HCT116 (cell line): ENCODE measurements at regions of chr10 and their contacts with region 1.

Region 1: GRCh38 chr10:101141616-101142532 is 10.8 kb downstream of the TLX1 start:
- DNase-seq: peak; percentile 81
- ATAC-seq: peak; percentile 96
- H3K4me3 ChIP-seq: 0 out of 4 replicates have a peak overlapping the region, but pooled peaks of 1 of the 2 experiments have one; percentile 6
- H3K27ac ChIP-seq: peak overlapping the region; percentile 41
- H3K4me1 ChIP-seq: peaks cover 3 to 23% of the 10 kb centered on the region in 2 experiments; a peak in 3 of 4 replicates
- H3K27me3 ChIP-seq: no peaks in the 10 kb centered on the region
- CTCF ChIP-seq: peak; percentile 99 to 100 (median 99)
- POLR2A ChIP-seq: no peak
- RAD21 ChIP-seq: peak; percentile 99

Region 2: DNA sequence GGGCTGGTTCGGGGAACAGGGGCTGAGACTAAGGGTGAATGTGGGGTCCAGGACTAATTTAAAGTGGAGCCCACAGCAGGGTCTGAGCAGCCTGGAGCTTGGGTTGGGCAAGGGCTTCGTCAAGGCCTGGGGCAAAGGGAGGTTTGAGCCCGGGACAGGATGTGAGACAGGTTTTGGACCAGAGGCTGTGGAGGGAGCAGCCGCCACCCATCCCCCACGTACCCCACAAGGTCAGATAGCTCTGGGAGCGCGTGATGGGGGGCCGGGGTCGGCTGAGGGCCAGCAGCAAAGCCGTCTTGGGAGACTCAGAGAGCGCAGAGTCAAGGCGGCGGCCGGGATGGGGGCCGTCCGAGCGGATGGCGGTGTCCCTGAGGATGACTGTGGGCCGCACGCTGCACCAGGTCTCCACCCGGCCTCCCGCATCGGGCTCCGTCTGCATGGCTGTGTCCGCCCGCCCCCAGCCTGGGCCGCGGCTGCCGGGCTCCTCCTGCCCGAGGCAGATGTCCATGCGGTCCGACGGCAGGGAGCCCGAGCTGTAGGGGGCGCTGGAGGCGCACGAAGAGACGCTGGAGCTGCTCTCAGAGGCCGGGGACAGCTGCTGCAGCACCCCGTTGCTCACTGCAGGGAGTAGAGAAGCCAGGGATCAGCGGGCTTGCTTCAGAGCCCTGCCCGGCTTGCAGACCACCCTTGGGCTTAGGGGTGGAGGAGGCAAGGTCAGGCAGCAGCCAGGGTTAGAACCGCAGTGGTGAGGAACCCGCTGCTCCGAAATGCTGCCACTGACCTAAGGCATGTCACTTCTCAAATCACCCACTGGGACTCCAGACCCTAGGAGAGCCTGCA is 123.1 kb before region 1 on chr10:
- CTCF ChIA-PET with region 1: interaction called, 18 read pairs
- POLR2A ChIA-PET with region 1: no interaction called
- RAD21 ChIA-PET with region 1: interaction called, 6 to 7 read pairs
- intact Hi-C with region 1: no loop called
- DNase-seq: peak; percentile 72
- ATAC-seq: peak; percentile 91
- H3K4me3 ChIP-seq: peak overlapping the region; percentile 13 to 38; a peak in 3 of 4 replicates
- H3K27ac ChIP-seq: no peak overlapping the region
- H3K4me1 ChIP-seq: peaks cover 7 to 30% of the 10 kb centered on the region in 2 experiments; a peak in 3 of 4 replicates
- H3K27me3 ChIP-seq: no peaks in the 10 kb centered on the region
- CTCF ChIP-seq: peak in 2 of 3 experiments; percentile 92 to 94; a peak in 4 of 6 replicates
- POLR2A ChIP-seq: no peak
- RAD21 ChIP-seq: no peak

Region 3: DNA sequence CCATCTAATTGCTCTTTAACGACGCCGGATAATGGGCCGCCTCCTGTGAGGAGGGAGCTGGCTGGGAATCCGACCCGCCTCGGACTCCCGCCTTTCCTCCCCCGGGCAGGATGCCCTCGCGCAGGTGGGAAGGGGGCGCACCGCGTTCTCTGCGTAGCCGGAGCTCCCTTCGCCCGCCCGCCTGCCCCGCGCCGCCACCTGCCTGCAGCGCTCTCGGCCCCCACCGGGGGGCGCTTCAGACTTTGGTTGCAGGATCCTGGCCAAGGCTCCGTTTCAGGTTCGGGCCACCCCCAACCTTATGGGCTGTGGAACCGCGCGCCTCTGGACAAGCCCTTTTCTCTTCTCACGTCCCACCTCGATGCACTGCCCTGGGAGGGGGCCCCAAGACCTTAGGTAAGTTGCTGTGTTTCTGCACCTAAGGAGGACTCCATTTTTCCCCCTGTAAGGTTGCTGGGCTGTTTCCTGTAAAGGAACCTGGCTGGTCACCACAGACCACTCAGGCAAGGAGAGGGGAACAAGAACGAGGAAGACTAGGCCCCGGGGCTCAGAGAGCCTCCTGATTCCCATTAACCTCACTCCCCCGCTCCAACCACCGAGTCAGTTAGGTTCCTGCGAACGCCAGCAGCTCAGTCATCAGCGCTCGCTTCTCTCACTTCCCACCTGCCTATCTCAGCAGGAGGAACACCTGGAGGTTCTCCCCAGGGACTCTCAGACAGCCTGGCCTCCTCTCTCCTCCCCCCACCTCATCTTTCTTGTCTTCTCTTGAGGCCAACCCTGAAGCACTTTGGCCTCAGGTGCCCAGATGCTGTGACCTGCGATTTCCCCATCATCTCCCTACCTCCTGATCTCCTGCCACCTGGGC is 91.4 kb before region 1 on chr10:
- CTCF ChIA-PET with region 1: interaction called, 104 read pairs
- POLR2A ChIA-PET with region 1: interaction called, 8 read pairs
- RAD21 ChIA-PET with region 1: interaction called, 17 read pairs
- intact Hi-C with region 1: no loop called
- DNase-seq: no peak
- ATAC-seq: peak; percentile 90
- H3K4me3 ChIP-seq: peak overlapping the region in 1 of 2 experiments; percentile 38; a peak in 3 of 4 replicates
- H3K27ac ChIP-seq: no peak overlapping the region; the same call in 1 of the 2 replicates
- H3K4me1 ChIP-seq: peaks cover 18 to 36% of the 10 kb centered on the region in 2 experiments
- H3K27me3 ChIP-seq: no peaks in the 10 kb centered on the region
- CTCF ChIP-seq: peak in 2 of 3 experiments; percentile 98; a peak in 4 of 6 replicates
- POLR2A ChIP-seq: no peak
- RAD21 ChIP-seq: no peak

Region 4: DNA sequence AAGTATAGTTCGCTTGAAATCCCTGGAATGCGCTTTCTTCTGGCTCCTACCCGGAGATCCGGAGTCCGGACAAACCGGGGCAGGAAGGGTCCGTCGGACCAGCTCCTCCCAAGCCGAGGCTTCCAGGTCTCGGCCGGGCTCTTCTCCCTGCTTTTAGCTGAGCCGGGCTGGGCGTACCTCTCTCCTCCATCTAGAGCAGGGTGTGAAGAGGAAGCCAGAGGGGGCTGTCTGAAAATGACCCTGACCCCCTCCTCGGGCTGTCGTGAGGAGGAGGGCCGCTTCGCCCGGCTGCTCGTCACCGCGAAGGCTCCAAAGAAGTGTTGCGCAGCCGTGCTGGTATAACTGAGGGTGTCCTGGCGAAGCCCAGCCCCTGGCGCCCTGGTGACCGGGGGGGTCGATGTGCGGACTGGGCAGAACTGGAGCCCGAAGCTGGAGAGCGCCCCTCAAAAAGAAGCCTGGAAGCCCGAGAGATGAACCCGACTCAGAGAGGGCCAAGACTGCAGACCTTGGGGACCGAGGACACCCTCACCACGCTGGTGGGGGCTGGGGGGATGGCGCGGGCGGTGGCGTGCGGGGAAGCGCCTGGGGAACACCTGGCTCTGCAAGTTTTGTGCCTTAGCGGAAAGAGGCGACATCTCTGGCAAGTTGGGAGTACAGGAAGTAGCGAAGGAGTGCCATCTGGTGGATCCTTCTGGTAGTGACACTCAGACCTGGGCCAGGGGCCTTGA is 74.4 kb before region 1 on chr10:
- CTCF ChIA-PET with region 1: interaction called, 44 read pairs
- POLR2A ChIA-PET with region 1: interaction called, 5 read pairs
- RAD21 ChIA-PET with region 1: interaction called, 4 to 6 read pairs
- intact Hi-C with region 1: no loop called
- DNase-seq: peak; percentile 91
- ATAC-seq: peak; percentile 39
- H3K4me3 ChIP-seq: peak overlapping the region; percentile 66 to 71
- H3K27ac ChIP-seq: peak overlapping the region; percentile 93
- H3K4me1 ChIP-seq: peaks cover 37 to 79% of the 10 kb centered on the region in 2 experiments
- H3K27me3 ChIP-seq: no peaks in the 10 kb centered on the region
- CTCF ChIP-seq: peak in 2 of 3 experiments; percentile 89 to 94; a peak in 4 of 6 replicates
- POLR2A ChIP-seq: no peak
- RAD21 ChIP-seq: no peak

Region 5: DNA sequence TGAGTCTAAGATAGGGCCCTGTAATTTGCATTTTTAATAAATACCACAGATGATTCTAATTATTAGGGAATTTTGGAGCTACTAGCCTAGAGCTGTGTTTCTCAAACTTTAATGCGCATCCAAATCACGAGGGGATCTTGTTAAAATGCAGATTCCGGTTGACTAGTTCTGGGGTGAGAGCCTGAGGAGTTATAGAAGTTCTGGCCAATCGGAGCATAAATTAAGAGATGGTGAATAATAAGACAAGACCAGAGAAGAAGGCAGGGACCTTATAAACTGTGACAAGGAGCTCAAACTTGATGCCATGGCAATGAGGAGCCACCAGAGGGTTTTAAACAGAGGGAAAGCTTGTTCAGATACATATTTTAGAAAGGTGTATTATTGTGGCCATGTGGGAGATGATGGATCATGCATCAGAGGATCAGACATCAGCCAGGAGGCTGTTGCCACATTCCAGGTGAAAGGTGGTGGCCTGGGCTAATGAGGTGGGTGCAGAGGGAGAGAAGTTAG is 40.4 kb before region 1 on chr10:
- CTCF ChIA-PET with region 1: interaction called, 414 read pairs
- POLR2A ChIA-PET with region 1: interaction called, 36 read pairs
- RAD21 ChIA-PET with region 1: interaction called, 44 to 92 read pairs
- intact Hi-C with region 1: no loop called
- DNase-seq: no peak
- ATAC-seq: peak; percentile 53; the same call in 1 of the 2 replicates
- H3K4me3 ChIP-seq: no peak overlapping the region
- H3K27ac ChIP-seq: no peak overlapping the region
- H3K4me1 ChIP-seq: no peaks in the 10 kb centered on the region
- H3K27me3 ChIP-seq: peaks cover 6% of the 10 kb centered on the region; the same call in 1 of the 2 replicates
- CTCF ChIP-seq: 0 out of 6 replicates have a peak, but pooled peaks of 1 of the 3 experiments have one; percentile 8
- POLR2A ChIP-seq: no peak
- RAD21 ChIP-seq: no peak

Region 6: DNA sequence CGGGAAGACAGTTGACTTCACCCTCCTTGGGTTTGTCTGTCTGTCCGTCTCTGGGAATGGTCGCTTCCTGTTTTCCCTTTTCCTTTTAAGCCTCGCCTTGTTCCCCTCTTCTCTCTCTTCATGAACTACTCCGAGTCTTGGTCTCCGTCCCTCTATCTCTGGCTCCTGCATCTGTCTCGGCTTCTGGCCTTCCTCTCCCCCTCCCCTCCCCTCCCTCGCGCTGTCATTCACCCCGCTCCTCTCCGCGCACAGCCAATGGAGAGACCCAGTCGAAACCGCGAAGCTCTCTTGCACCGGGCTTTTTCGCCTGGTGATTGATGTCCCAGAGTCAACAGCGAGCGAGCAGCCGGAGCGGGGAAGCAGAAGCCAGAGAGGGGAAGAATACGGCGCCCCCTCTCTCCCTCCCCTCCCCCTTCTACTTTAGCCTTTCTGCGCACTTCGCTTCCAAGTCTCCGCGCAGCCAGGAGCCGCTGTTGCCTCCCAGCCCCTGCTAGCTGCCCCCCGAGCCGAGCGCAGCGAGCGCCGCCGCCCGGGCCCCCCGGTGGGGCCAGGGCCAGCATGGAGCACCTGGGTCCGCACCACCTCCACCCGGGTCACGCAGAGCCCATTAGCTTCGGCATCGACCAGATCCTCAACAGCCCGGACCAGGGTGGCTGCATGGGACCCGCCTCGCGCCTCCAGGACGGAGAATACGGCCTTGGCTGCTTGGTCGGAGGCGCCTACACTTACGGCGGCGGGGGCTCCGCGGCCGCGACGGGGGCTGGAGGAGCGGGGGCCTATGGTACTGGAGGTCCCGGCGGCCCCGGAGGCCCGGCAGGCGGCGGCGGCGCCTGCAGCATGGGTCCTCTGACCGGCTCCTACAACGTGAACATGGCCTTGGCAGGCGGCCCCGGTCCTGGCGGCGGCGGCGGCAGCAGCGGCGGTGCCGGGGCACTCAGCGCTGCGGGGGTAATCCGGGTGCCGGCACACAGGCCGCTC is 10.6 kb before region 1 on chr10 and contains the start of gene TLX1:
- CTCF ChIA-PET with region 1: interaction called, 14 read pairs
- POLR2A ChIA-PET with region 1: interaction called, 4 read pairs
- RAD21 ChIA-PET with region 1: no interaction called
- intact Hi-C with region 1: no loop called
- DNase-seq: no peak
- ATAC-seq: no peak
- H3K4me3 ChIP-seq: no peak within 1 kb of the TSS
- H3K27ac ChIP-seq: no peak within 1 kb of the TSS
- H3K4me1 ChIP-seq: peaks cover 9 to 11% of the 10 kb centered on the region in 2 experiments
- H3K27me3 ChIP-seq: peaks cover 7% of the 10 kb centered on the region; the same call in 1 of the 2 replicates
- CTCF ChIP-seq: no peak
- POLR2A ChIP-seq: no peak
- RAD21 ChIP-seq: no peak
- total RNA-seq, gene TLX1: not detected

Region 7: GRCh38 chr10:101161494-101162299 is 19.8 kb after region 1 on chr10:
- CTCF ChIA-PET with region 1: interaction called, 17 read pairs
- POLR2A ChIA-PET with region 1: no interaction called
- RAD21 ChIA-PET with region 1: no interaction called
- intact Hi-C with region 1: no loop called
- DNase-seq: peak; percentile 72
- ATAC-seq: peak; percentile 95
- H3K4me3 ChIP-seq: peak overlapping the region; percentile 38 to 47
- H3K27ac ChIP-seq: no peak overlapping the region
- H3K4me1 ChIP-seq: peaks cover 4 to 15% of the 10 kb centered on the region in 2 experiments; a peak in 3 of 4 replicates
- H3K27me3 ChIP-seq: no peaks in the 10 kb centered on the region
- CTCF ChIP-seq: peak; percentile 95 to 100 (median 99)
- POLR2A ChIP-seq: no peak
- RAD21 ChIP-seq: peak; percentile 99